ENCODE measurements at regions of chr3 and their contacts with region 1.

Region 1: GRCh38 chr3:111238885-111239284 is 167.3 kb downstream of the NECTIN3 start:
- DNase-seq: peak in 6 of 9 donors; percentile 16 to 47 (median 34)
- ATAC-seq: peak; percentile 75
- H3K4me3 ChIP-seq: no peak overlapping the region
- H3K4me3 Mint-ChIP-seq: peak overlapping the region in 8 of 10 donors; percentile 0 to 76 (median 54)
- H3K27ac ChIP-seq: peak overlapping the region; percentile 4
- H3K27ac Mint-ChIP-seq: peak overlapping the region; percentile 0 to 90 (median 64)
- H3K4me1 ChIP-seq: peaks cover 6 to 15% of the 10 kb centered on the region in 2 donors
- H3K4me1 Mint-ChIP-seq: peaks cover 11 to 47% (median 35%) of the 10 kb centered on the region in 7 donors
- H3K27me3 ChIP-seq: no peaks in the 10 kb centered on the region
- H3K27me3 Mint-ChIP-seq: no peaks in the 10 kb centered on the region

Region 2: DNA sequence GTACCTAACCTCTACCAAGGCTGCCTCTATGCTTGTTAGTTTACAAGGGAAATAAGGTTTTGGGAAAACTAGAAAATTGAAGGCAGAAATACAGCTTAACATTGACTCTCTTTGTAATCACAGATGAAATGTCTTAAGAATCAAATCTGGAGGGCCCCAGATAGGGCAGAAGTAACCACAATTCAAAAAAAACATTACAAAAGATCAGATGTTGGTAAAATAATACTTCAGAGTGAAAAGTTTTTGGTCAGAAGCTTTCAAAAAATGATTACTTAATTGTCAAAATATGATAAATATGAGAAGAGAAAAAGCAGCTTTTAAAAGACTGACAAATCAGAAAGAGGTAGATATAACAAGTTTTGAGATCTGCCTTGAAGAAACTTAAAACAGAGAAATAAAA is 592.4 kb before region 1 on chr3:
- CTCF ChIA-PET with region 1: no interaction called
- POLR2A ChIA-PET with region 1: no interaction called
- intact Hi-C with region 1: no loop called
- DNase-seq: no peak
- ATAC-seq: no peak
- H3K4me3 ChIP-seq: no peak overlapping the region
- H3K4me3 Mint-ChIP-seq: no peak overlapping the region
- H3K27ac ChIP-seq: no peak overlapping the region
- H3K27ac Mint-ChIP-seq: no peak overlapping the region
- H3K4me1 ChIP-seq: no peaks in the 10 kb centered on the region
- H3K4me1 Mint-ChIP-seq: peaks cover 0 to 3% (median 0%) of the 10 kb centered on the region in 7 donors
- H3K27me3 ChIP-seq: no peaks in the 10 kb centered on the region
- H3K27me3 Mint-ChIP-seq: peaks cover 0 to 16% (median 3%) of the 10 kb centered on the region in 5 donors

Region 3: GRCh38 chr3:111197485-111197884 is 41.4 kb before region 1 on chr3:
- CTCF ChIA-PET with region 1: no interaction called
- POLR2A ChIA-PET with region 1: no interaction called
- intact Hi-C with region 1: loop called in 1 of 2 experiments (anchors 5 kb)
- DNase-seq: no peak
- ATAC-seq: no peak
- H3K4me3 ChIP-seq: no peak overlapping the region
- H3K4me3 Mint-ChIP-seq: peak overlapping the region in 1 of 10 donors; percentile 36
- H3K27ac ChIP-seq: no peak overlapping the region
- H3K27ac Mint-ChIP-seq: no peak overlapping the region
- H3K4me1 ChIP-seq: no peaks in the 10 kb centered on the region
- H3K4me1 Mint-ChIP-seq: peaks cover 0 to 9% (median 0%) of the 10 kb centered on the region in 7 donors
- H3K27me3 ChIP-seq: no peaks in the 10 kb centered on the region
- H3K27me3 Mint-ChIP-seq: no peaks in the 10 kb centered on the region

Region 4: DNA sequence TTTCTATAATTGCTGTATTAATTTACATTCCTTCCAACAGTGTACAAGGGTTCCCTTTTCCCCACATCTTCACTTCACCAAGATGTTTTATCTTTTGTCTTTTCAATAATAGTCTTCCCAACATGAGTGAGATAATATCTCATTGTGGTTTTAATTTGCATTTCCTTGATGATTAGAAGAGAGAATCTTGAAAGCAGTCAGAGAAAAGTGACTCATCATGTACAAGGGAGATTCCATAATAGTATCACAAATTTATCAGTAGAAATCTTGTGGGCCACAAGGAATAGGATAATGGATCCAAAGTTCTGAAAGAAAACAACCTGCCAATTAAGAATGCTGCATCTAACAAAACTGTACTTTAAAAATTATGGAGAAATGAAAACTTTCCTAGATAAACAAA is 22.0 kb after region 1 on chr3:
- CTCF ChIA-PET with region 1: no interaction called
- POLR2A ChIA-PET with region 1: no interaction called
- intact Hi-C with region 1: loop called in 1 of 2 experiments (anchors 1 kb)
- DNase-seq: no peak
- ATAC-seq: no peak
- H3K4me3 ChIP-seq: no peak overlapping the region
- H3K4me3 Mint-ChIP-seq: no peak overlapping the region
- H3K27ac ChIP-seq: no peak overlapping the region
- H3K27ac Mint-ChIP-seq: no peak overlapping the region
- H3K4me1 ChIP-seq: no peaks in the 10 kb centered on the region
- H3K4me1 Mint-ChIP-seq: peaks cover 5 to 25% (median 9%) of the 10 kb centered on the region in 7 donors
- H3K27me3 ChIP-seq: no peaks in the 10 kb centered on the region
- H3K27me3 Mint-ChIP-seq: peaks cover 0 to 34% (median 0%) of the 10 kb centered on the region in 5 donors

Region 5: GRCh38 chr3:111351334-111351733 is 112.4 kb after region 1 on chr3:
- CTCF ChIA-PET with region 1: no interaction called
- POLR2A ChIA-PET with region 1: no interaction called
- intact Hi-C with region 1: no loop called
- DNase-seq: no peak
- ATAC-seq: no peak
- H3K4me3 ChIP-seq: no peak overlapping the region
- H3K4me3 Mint-ChIP-seq: no peak overlapping the region
- H3K27ac ChIP-seq: no peak overlapping the region
- H3K27ac Mint-ChIP-seq: peak overlapping the region in 1 of 9 donors; percentile 16
- H3K4me1 ChIP-seq: no peaks in the 10 kb centered on the region
- H3K4me1 Mint-ChIP-seq: no peaks in the 10 kb centered on the region
- H3K27me3 ChIP-seq: no peaks in the 10 kb centered on the region
- H3K27me3 Mint-ChIP-seq: peaks cover 0 to 3% (median 0%) of the 10 kb centered on the region in 5 donors